ENCODE measurements at regions of chr9 and their contacts with region 1.

Region 1: GRCh38 chr9:133532937-133533668 is 1.4 kb upstream of the ADAMTSL2 start:
- DNase-seq: peak; percentile 77 to 86
- ATAC-seq: peak; percentile 85

Region 2: DNA sequence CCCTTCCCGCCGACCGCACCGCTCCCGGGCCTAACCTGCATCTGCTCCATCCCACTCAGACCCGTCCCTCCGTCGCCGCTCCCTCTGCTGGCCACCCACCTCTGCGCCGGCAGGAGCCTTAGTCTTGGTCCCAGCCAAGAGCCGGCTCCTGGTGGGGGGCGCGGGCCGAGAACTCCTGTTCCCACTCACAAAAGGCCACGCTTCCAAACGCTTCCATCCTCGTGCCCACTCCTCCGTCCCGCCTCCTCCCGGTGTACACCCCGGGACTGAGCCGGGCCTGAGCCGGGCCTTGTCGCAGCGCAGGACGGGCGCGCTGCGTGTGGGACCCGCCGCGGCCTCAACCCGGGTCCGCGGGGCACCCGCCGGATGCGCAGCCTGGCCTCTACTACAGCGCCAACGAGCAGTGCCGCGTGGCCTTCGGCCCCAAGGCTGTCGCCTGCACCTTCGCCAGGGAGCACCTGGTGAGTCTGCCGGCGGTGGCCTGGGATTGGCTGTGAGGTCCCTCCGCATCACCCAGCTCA is 103.4 kb before region 1 on chr9:
- intact Hi-C with region 1: no loop called
- DNase-seq: peak; percentile 49 to 65
- ATAC-seq: peak; percentile 65

Region 3: GRCh38 chr9:133499132-133499891 is 33.8 kb before region 1 on chr9:
- intact Hi-C with region 1: no loop called
- DNase-seq: no peak
- ATAC-seq: peak; percentile 81

Region 4: DNA sequence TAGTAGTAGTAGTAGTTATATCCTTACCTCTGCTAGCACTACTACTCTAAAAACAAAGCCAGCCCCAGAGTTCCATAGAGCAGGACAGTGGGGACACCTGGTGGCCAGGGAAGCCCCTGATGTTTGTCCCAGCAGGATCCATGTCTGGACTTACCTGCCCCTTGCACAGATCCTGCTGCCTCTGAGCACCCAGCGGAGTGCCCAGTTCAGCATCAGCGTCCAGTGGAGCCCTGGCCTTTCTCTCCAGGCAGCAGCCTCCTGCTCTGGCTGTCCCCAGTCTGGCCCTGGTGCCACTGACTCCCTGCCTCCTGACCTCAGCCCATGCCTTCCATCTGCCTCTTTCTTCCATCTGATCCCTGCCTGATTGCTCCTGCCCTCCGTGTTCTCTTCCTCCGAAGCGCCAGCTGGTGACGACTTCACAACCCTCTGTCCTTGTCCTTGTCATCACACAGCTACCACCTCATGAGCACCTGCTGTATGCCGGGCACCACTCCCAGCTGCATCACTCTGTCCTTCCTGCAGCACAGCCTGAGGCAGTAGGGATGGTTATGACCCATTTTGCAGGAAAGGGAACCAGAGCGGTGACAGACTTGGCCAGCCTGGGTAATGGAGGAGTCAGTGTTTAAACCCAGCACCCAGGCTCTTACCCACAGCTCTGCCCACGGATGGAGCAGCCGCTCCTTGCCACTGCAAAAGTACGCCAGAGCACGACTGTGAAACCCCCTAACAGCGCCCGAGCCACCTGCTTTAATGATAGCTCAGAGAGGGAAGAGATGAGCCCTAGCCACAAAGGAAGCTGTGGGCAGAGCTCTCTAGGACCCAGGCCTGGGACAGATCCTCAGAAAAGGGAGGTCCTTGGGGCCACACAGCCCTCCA is 193.5 kb after region 1 on chr9:
- intact Hi-C with region 1: loop called in 1 of 2 experiments (anchors 5 kb)
- DNase-seq: peak; percentile 31 to 68
- ATAC-seq: peak; percentile 87

Measured in left colon (tissue), 2 donors.